ENCODE measurements at regions of chr12 and their contacts with region 1.

Region 1: GRCh38 chr12:49967042-49967776 is 5.5 kb downstream of the AQP5 start:
- DNase-seq: peak; percentile 79
- H3K4me3 ChIP-seq: peak overlapping the region in 2 of 3 experiments; percentile 14 to 24
- H3K27ac ChIP-seq: no peak overlapping the region
- H3K4me1 ChIP-seq: peaks cover 11% of the 10 kb centered on the region
- H3K27me3 ChIP-seq: peaks cover 16 to 18% of the 10 kb centered on the region in 2 experiments
- CTCF ChIP-seq: peak; percentile 76 to 98
- POLR2A ChIP-seq: no peak

Region 2: DNA sequence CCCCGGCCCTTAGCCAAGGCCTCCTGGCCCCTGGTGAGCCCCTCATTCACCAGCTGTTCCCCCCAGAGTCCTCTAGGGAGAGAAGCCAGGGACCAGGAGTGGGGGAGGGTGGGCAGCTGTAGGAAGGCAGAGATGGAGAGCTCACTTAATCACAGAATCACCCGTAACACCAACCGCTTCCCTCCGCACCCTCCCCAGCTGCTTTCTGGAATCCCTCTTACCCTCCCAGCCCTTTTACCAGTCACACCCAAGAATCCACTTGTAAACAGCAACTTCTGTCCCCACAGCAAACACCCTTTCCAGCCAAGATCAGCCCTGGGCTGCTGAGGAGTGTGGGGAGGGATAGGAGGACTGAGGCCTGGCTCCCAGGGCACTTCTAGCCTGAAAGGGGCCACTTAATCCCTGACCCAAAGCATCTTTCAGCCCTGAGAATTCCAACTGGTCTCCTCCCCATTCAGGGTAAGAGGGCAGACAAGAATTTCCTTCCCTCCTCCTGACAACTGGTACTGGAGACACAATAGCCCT is 157.8 kb before region 1 on chr12:
- CTCF ChIA-PET with region 1: no interaction called
- POLR2A ChIA-PET with region 1: no interaction called
- dilution Hi-C with region 1: no loop called
- intact Hi-C with region 1: no loop called
- DNase-seq: no peak
- H3K4me3 ChIP-seq: no peak overlapping the region
- H3K27ac ChIP-seq: no peak overlapping the region
- H3K4me1 ChIP-seq: no peaks in the 10 kb centered on the region
- H3K27me3 ChIP-seq: no peaks in the 10 kb centered on the region
- CTCF ChIP-seq: no peak
- POLR2A ChIP-seq: no peak

Region 3: GRCh38 chr12:49872781-49873181 is 94.4 kb before region 1 on chr12:
- CTCF ChIA-PET with region 1: interaction called, 183 read pairs
- POLR2A ChIA-PET with region 1: interaction called, 5 read pairs
- dilution Hi-C with region 1: no loop called
- intact Hi-C with region 1: loop called (anchors 1 kb)
- DNase-seq: no peak
- H3K4me3 ChIP-seq: no peak overlapping the region
- H3K27ac ChIP-seq: no peak overlapping the region
- H3K4me1 ChIP-seq: peaks cover 20% of the 10 kb centered on the region
- H3K27me3 ChIP-seq: peaks cover 0 to 6% of the 10 kb centered on the region in 2 experiments
- CTCF ChIP-seq: no peak
- POLR2A ChIP-seq: no peak

Region 4: GRCh38 chr12:50006789-50007436 is 39.7 kb after region 1 on chr12:
- CTCF ChIA-PET with region 1: interaction called, 13 read pairs
- POLR2A ChIA-PET with region 1: no interaction called
- dilution Hi-C with region 1: no loop called
- intact Hi-C with region 1: no loop called
- DNase-seq: no peak
- H3K4me3 ChIP-seq: no peak overlapping the region
- H3K27ac ChIP-seq: no peak overlapping the region
- H3K4me1 ChIP-seq: peaks cover 3% of the 10 kb centered on the region
- H3K27me3 ChIP-seq: no peaks in the 10 kb centered on the region
- CTCF ChIP-seq: no peak
- POLR2A ChIP-seq: no peak

Region 5: DNA sequence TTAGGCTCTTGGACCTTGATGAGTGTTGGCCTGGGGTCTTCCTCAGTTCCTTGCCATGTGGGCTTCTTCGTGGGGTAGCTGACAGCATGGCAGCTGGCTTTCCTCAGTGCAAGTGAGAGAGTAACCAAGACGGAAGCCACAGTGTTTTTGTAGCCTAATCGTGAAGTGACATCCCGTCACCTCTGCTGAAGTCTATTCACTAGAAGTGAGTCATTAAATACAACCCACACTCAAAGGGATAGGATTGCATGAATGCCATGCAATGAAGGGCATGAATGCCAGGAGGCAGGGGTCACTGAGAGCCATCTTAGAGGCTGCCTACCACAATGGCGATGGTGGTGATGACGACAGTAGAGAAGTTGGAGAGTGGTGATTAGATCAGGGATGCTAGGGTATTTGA is 76.6 kb after region 1 on chr12:
- CTCF ChIA-PET with region 1: interaction called, 37 read pairs
- POLR2A ChIA-PET with region 1: no interaction called
- dilution Hi-C with region 1: no loop called
- intact Hi-C with region 1: no loop called
- DNase-seq: no peak
- H3K4me3 ChIP-seq: no peak overlapping the region
- H3K27ac ChIP-seq: no peak overlapping the region
- H3K4me1 ChIP-seq: no peaks in the 10 kb centered on the region
- H3K27me3 ChIP-seq: peaks cover 7 to 10% of the 10 kb centered on the region in 2 experiments
- CTCF ChIP-seq: no peak
- POLR2A ChIP-seq: no peak

Region 6: GRCh38 chr12:50111693-50112455 is 144.7 kb after region 1 on chr12 and contains the start of gene COX14:
- CTCF ChIA-PET with region 1: interaction called, 10 read pairs
- POLR2A ChIA-PET with region 1: no interaction called
- dilution Hi-C with region 1: no loop called
- intact Hi-C with region 1: no loop called
- DNase-seq: peak; percentile 100
- H3K4me3 ChIP-seq: peak within 1 kb of the TSS; percentile 0 to 76 (median 59)
- H3K27ac ChIP-seq: peak within 1 kb of the TSS; percentile 6
- H3K4me1 ChIP-seq: peaks cover 9% of the 10 kb centered on the region
- H3K27me3 ChIP-seq: no peaks in the 10 kb centered on the region
- CTCF ChIP-seq: peak; percentile 98 to 99
- POLR2A ChIP-seq: peak; percentile 92
- total RNA-seq, gene COX14: 40.0 and 40.3 TPM in 2 replicates

Region 7: DNA sequence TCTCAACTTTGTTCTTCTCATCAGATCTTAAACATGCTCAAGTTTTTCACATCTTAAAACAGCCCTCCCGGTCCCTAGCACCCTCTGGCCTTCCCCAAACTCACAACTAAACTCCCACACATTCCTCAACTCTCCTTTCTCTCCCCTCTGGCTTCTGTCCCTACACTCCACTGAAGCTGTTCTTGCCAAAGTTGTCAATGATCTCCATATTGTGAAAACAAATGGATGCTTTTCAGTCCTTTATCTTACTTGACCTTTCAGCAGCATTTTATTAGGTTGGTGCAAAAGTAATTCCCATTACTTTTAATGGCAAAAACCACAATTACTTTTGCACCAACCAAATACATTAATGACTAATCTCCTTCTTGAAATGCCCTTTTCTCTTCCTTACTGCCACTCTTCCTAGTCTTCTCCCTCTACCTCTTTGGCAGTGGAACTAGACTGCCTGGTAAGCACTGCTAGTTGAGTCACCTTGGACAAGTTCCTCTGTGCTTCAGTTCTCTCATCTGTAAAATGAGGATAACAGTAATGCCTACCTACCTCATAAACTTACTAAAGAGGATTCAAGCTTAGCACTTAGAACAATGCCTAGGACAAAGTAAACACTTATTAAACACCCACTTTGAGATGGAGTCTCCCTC is 184.0 kb after region 1 on chr12:
- CTCF ChIA-PET with region 1: no interaction called
- POLR2A ChIA-PET with region 1: no interaction called
- dilution Hi-C with region 1: no loop called
- intact Hi-C with region 1: no loop called
- DNase-seq: no peak
- H3K4me3 ChIP-seq: no peak overlapping the region
- H3K27ac ChIP-seq: no peak overlapping the region
- H3K4me1 ChIP-seq: no peaks in the 10 kb centered on the region
- H3K27me3 ChIP-seq: no peaks in the 10 kb centered on the region
- CTCF ChIP-seq: no peak
- POLR2A ChIP-seq: no peak